ENCODE measurements at regions of chr11 and their contacts with region 1.

Region 1: DNA sequence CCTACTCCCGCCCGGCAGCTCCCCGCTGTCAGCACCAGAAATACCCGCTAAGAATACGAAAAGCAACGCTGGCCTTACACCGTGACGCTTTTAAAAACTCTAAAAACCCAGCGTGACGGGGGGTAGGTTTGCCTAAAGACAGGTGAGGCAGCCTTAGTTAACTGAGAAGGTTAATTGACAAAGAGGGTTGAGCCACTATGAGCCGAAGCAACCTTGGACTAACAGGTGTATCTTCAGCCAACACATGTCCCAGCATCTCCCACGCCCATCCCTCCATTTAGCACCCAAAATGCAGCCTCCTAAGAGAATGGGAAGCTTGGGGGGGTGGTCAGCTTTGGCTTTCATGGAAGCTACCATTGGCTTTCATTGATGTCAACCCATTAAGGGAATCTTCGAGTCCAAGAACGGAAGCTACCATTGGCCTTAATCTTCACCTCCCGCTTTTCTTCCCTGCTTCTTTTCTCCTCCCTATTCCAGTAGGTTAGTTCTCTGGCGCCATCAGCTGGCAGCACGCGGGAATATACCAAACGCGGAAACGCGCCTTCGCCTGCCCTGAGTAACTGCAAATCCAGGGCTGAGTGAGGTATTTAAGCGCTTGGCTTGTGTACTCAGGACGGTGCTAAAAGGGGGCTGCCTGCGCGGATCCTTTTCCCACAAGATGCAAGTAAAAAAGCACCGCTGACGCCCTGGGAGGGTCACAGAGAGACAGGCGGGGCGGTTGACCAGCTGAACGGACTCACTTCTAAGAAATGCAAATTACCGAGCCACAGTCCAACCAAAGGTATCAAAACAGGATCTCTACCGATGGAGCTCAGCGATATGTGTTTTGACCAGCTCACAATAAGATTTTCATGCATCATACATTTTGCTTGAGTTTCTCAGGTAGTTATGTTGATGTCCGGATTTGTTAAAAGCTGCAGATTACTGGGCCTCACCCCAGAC is 38.5 kb upstream of the GLYATL1 start:
- DNase-seq: peak; percentile 90
- H3K4me3 ChIP-seq: no peak overlapping the region
- H3K4me3 Mint-ChIP-seq: peak overlapping the region; percentile 41
- H3K27ac Mint-ChIP-seq: no peak overlapping the region
- H3K4me1 ChIP-seq: no peaks in the 10 kb centered on the region
- H3K4me1 Mint-ChIP-seq: no peaks in the 10 kb centered on the region
- H3K27me3 ChIP-seq: no peaks in the 10 kb centered on the region
- H3K27me3 Mint-ChIP-seq: no peaks in the 10 kb centered on the region
- CTCF ChIP-seq: peak; percentile 63 to 75

Region 2: GRCh38 chr11:58629857-58630256 is 270.9 kb before region 1 on chr11:
- CTCF ChIA-PET with region 1: interaction called, 11 read pairs
- POLR2A ChIA-PET with region 1: no interaction called
- intact Hi-C with region 1: no loop called
- DNase-seq: peak in 1 of 2 experiments; percentile 43
- H3K4me3 ChIP-seq: no peak overlapping the region
- H3K4me3 Mint-ChIP-seq: no peak overlapping the region
- H3K27ac Mint-ChIP-seq: no peak overlapping the region
- H3K4me1 ChIP-seq: no peaks in the 10 kb centered on the region
- H3K4me1 Mint-ChIP-seq: no peaks in the 10 kb centered on the region
- H3K27me3 ChIP-seq: no peaks in the 10 kb centered on the region
- H3K27me3 Mint-ChIP-seq: no peaks in the 10 kb centered on the region
- CTCF ChIP-seq: peak; percentile 37 to 59

Region 3: DNA sequence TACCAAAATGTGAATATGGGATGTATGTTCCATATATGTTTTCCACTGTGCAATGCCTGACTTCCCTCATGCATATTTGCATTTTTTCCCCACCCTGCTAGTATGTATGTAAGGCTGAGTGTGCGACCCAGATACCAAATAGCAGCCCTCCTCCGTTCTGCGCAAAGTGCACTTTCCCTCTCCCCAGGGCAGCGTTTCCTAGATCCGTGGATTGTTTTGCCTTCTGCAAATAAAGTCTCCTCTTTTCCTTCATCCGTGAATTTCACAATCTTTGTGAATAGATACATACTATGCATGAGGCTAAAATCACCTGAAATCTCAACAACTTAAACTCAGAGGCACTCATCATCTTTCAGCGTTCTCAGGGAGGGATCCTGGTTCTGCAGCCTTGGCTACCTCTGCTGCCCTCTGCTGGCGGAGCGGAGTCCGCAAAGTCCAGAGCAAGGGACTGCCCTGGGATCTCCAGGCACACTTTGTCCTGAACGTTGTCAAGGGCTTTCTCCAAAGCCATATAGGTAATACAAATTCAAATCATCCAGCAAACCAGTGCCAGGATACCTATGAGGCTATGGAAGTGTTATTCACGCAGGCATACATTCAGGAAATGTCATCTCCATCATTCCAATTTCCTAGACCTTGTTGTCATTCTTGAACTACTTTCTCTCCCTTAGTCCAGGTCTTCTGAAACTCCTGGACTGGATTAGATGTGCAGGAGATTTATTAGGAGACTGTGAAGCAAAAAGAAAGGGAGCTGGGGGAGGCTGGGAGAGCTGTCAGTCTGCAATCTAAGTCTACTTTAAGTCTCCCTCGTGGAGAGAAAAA is 225.2 kb before region 1 on chr11:
- CTCF ChIA-PET with region 1: interaction called, 3 read pairs
- POLR2A ChIA-PET with region 1: no interaction called
- intact Hi-C with region 1: loop called (anchors 1 kb)
- DNase-seq: peak; percentile 78 to 85
- H3K4me3 ChIP-seq: no peak overlapping the region
- H3K4me3 Mint-ChIP-seq: no peak overlapping the region
- H3K27ac Mint-ChIP-seq: no peak overlapping the region
- H3K4me1 ChIP-seq: no peaks in the 10 kb centered on the region
- H3K4me1 Mint-ChIP-seq: no peaks in the 10 kb centered on the region
- H3K27me3 ChIP-seq: no peaks in the 10 kb centered on the region
- H3K27me3 Mint-ChIP-seq: no peaks in the 10 kb centered on the region
- CTCF ChIP-seq: peak; percentile 92 to 98

Region 4: DNA sequence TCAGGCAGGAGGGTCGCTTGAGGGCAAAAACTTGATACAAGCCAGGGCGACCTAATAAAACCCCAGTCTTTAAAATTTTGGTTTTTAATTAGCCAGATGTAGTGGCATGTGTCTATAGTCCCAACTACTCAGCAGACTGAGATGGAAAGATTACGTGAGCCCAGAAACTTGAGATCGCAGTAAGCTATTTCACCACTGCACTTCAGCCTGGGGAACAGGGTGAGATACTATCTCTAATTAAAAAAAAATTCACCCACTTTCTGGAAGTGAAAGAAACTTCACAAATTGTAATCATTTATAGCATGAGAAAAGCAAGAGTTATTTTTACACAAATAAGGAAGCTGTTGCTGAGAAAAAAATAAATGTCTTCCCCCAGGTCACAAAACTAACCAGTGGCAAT is 55.4 kb before region 1 on chr11:
- CTCF ChIA-PET with region 1: interaction called, 9 read pairs
- POLR2A ChIA-PET with region 1: no interaction called
- intact Hi-C with region 1: loop called (anchors 1 kb)
- DNase-seq: no peak
- H3K4me3 ChIP-seq: no peak overlapping the region
- H3K4me3 Mint-ChIP-seq: no peak overlapping the region
- H3K27ac Mint-ChIP-seq: no peak overlapping the region
- H3K4me1 ChIP-seq: no peaks in the 10 kb centered on the region
- H3K4me1 Mint-ChIP-seq: no peaks in the 10 kb centered on the region
- H3K27me3 ChIP-seq: no peaks in the 10 kb centered on the region
- H3K27me3 Mint-ChIP-seq: peaks cover 11% of the 10 kb centered on the region
- CTCF ChIP-seq: no peak